ENCODE measurements at regions of chr9 and their contacts with region 1.

Region 1: DNA sequence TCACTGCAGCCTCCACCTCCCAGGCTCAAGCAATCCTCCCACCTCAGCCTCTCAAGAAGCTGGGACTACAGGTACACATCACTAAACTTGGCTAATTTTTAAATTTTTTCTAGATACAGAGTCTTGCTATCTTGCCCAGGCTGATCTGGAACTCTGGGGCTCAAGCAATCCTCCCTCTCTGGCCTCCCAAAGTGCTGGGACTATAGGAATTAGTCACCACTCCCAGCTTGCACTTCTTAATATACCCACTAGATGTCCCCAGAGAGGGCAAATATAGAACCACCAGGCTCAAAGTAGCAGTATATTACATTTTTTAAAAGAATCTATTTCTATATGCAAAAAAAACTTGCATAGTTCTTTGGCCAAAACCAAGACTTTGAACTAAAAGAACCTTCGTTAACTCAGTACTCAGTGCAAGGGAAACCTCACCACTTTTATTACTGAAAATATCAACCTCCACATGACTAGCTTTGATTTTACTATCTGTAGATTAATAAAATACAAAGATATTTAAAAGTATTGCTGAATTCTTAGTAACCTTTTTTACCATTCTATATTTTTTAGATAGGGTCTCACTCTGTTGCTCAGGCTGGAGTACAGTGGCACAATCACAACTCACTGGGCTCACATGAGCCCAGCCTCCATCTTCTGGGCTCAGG is 25.8 kb upstream of the HSD17B3 start:
- DNase-seq: peak in 7 of 9 experiments; percentile 16 to 72 (median 52)
- ATAC-seq: peak; percentile 87
- H3K4me3 ChIP-seq: no peak overlapping the region
- H3K4me3 Mint-ChIP-seq: no peak overlapping the region
- H3K27ac ChIP-seq: no peak overlapping the region
- H3K27ac Mint-ChIP-seq: no peak overlapping the region
- H3K4me1 ChIP-seq: no peaks in the 10 kb centered on the region
- H3K4me1 Mint-ChIP-seq: no peaks in the 10 kb centered on the region
- H3K27me3 ChIP-seq: no peaks in the 10 kb centered on the region
- H3K27me3 Mint-ChIP-seq: no peaks in the 10 kb centered on the region
- CTCF ChIP-seq: peak; percentile 91

Region 2: GRCh38 chr9:96217754-96218693 is 109.8 kb before region 1 on chr9:
- CTCF ChIA-PET with region 1: no interaction called
- POLR2A ChIA-PET with region 1: no interaction called
- intact Hi-C with region 1: no loop called
- DNase-seq: peak; percentile 48 to 88 (median 77)
- ATAC-seq: peak; percentile 81
- H3K4me3 ChIP-seq: peak overlapping the region; percentile 9 to 27
- H3K4me3 Mint-ChIP-seq: peak overlapping the region; percentile 80
- H3K27ac ChIP-seq: no peak overlapping the region
- H3K27ac Mint-ChIP-seq: no peak overlapping the region
- H3K4me1 ChIP-seq: peaks cover 8% of the 10 kb centered on the region
- H3K4me1 Mint-ChIP-seq: peaks cover 12% of the 10 kb centered on the region
- H3K27me3 ChIP-seq: peaks cover 0 to 8% of the 10 kb centered on the region in 2 experiments
- H3K27me3 Mint-ChIP-seq: peaks cover 37% of the 10 kb centered on the region
- CTCF ChIP-seq: peak; percentile 98

Region 3: GRCh38 chr9:96338299-96338698 is 10.5 kb after region 1 on chr9:
- CTCF ChIA-PET with region 1: no interaction called
- POLR2A ChIA-PET with region 1: no interaction called
- intact Hi-C with region 1: no loop called
- DNase-seq: no peak
- ATAC-seq: no peak
- H3K4me3 ChIP-seq: no peak overlapping the region
- H3K4me3 Mint-ChIP-seq: no peak overlapping the region
- H3K27ac ChIP-seq: no peak overlapping the region
- H3K27ac Mint-ChIP-seq: no peak overlapping the region
- H3K4me1 ChIP-seq: no peaks in the 10 kb centered on the region
- H3K4me1 Mint-ChIP-seq: no peaks in the 10 kb centered on the region
- H3K27me3 ChIP-seq: no peaks in the 10 kb centered on the region
- H3K27me3 Mint-ChIP-seq: no peaks in the 10 kb centered on the region
- CTCF ChIP-seq: no peak

Region 4: DNA sequence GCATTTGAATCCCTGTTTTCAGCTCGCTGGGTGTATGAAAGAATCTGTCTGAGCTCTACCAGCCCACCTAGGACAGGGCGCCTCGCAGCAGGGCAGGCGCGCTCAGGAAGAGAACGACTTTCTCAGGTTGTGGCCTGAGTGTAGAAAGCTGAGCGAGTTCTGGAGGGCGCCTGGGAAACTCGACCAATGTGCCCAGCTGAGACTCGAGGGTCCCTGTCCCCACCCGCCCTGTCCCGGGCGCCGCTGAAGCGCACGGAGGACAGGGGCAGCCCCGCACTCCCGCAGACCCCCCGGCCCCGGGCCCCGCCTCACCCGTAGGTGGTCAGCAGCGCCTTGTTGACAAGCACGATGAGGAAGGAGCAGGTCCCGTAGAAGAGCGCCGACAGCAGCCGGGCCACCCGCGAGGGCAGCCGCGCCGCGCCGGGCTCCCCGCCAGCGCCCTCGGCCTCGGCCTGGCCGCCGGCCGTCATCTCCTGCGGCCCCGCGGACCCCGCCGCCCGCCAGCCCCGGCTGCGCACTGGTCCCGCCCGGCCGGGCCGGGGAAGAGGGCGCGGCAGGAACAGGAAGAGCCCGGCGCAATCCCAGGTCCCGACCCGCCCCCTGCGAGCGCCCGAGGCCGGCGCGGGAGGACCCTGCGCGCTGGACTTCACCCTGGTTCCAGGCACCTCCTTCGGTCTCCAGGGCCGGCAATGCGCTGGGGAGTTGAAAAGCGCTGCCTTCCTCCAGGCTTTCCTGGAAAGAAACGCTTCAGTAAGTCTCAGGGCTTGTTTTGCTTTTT is 55.5 kb after region 1 on chr9 and contains the start of gene SLC35D2:
- CTCF ChIA-PET with region 1: interaction called, 5 read pairs
- POLR2A ChIA-PET with region 1: no interaction called
- intact Hi-C with region 1: loop called in 1 of 2 experiments (anchors 5 kb)
- DNase-seq: peak in 7 of 9 experiments; percentile 1 to 62 (median 15)
- ATAC-seq: peak; percentile 63
- H3K4me3 ChIP-seq: peak within 1 kb of the TSS; percentile 54 to 60
- H3K4me3 Mint-ChIP-seq: peak within 1 kb of the TSS; percentile 90
- H3K27ac ChIP-seq: peak within 1 kb of the TSS in 1 of 2 experiments; percentile 43
- H3K27ac Mint-ChIP-seq: peak within 1 kb of the TSS; percentile 85
- H3K4me1 ChIP-seq: peaks cover 18% of the 10 kb centered on the region
- H3K4me1 Mint-ChIP-seq: peaks cover 36% of the 10 kb centered on the region
- H3K27me3 ChIP-seq: no peaks in the 10 kb centered on the region
- H3K27me3 Mint-ChIP-seq: no peaks in the 10 kb centered on the region
- CTCF ChIP-seq: no peak
- total RNA-seq, gene SLC35D2: 18.5 to 20.5 TPM

Region 5: GRCh38 chr9:96449845-96450612 is 122.2 kb after region 1 on chr9 and contains the start of gene HABP4:
- CTCF ChIA-PET with region 1: interaction called, 15 read pairs
- POLR2A ChIA-PET with region 1: interaction called, 13 read pairs
- intact Hi-C with region 1: loop called in 1 of 2 experiments (anchors 10 kb)
- DNase-seq: peak; percentile 89 to 97 (median 96)
- ATAC-seq: peak; percentile 93
- H3K4me3 ChIP-seq: peak within 1 kb of the TSS; percentile 62 to 65
- H3K4me3 Mint-ChIP-seq: peak within 1 kb of the TSS; percentile 95
- H3K27ac ChIP-seq: peak within 1 kb of the TSS; percentile 16 to 59
- H3K27ac Mint-ChIP-seq: peak within 1 kb of the TSS; percentile 94
- H3K4me1 ChIP-seq: peaks cover 12% of the 10 kb centered on the region
- H3K4me1 Mint-ChIP-seq: peaks cover 24% of the 10 kb centered on the region
- H3K27me3 ChIP-seq: no peaks in the 10 kb centered on the region
- H3K27me3 Mint-ChIP-seq: no peaks in the 10 kb centered on the region
- CTCF ChIP-seq: no peak
- total RNA-seq, gene HABP4: 31.9 to 32.6 TPM

Region 6: DNA sequence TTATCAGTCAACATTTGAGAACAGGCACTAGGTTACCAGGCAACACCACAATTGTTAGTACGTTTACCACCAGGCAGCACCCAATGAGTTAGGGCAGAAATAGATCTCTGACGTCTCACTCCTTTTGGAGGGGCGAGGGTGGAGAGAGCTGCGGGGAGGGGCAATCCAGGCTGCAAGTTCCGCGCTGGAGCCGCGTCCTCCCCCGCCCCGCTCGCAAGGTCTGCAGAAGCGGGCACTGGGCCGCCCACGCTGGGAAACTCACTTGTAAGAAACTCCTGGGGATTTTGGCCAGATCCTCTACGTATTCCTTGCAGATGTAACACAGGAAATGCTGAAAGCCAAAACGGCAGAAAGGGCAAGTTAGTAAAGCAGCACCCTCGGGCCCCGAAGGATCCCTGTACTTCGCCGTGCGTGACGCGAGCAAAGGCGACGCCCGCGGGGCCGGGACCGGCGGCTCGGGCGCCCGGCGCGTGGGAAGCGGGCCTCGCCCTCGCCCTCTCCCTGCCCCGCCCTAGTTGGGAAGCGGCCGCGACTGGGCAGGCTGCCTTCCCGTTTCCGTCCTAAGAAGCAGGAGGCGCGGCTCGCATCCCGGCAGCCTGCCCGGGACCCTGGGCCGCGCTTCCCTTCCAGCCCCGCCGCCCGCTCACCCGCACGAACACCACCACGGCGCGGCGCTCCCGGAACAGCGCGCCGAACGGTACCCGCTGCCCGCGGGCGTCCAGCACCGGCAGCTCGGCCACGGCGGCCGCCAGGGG is 326.8 kb after region 1 on chr9:
- CTCF ChIA-PET with region 1: interaction called, 8 read pairs
- POLR2A ChIA-PET with region 1: no interaction called
- intact Hi-C with region 1: loop called (anchors 1 to 5 kb)
- DNase-seq: peak; percentile 52 to 96 (median 77)
- ATAC-seq: peak; percentile 88
- H3K4me3 ChIP-seq: peak overlapping the region; percentile 57 to 71
- H3K4me3 Mint-ChIP-seq: peak overlapping the region; percentile 97
- H3K27ac ChIP-seq: peak overlapping the region; percentile 62 to 66
- H3K27ac Mint-ChIP-seq: peak overlapping the region; percentile 98
- H3K4me1 ChIP-seq: peaks cover 7% of the 10 kb centered on the region
- H3K4me1 Mint-ChIP-seq: peaks cover 22% of the 10 kb centered on the region
- H3K27me3 ChIP-seq: no peaks in the 10 kb centered on the region
- H3K27me3 Mint-ChIP-seq: no peaks in the 10 kb centered on the region
- CTCF ChIP-seq: no peak

Measured in CD8-positive, alpha-beta T cell (primary cell).